ENCODE measurements at regions of chr7 and their contacts with region 1.

Region 1: GRCh38 chr7:107078517-107078966 is 34.0 kb downstream of the PRKAR2B start:
- DNase-seq: peak; percentile 95
- H3K4me3 ChIP-seq: peak overlapping the region in 1 of 3 experiments; percentile 40
- H3K27ac ChIP-seq: peak overlapping the region; percentile 95
- H3K4me1 ChIP-seq: peaks cover 51% of the 10 kb centered on the region
- H3K27me3 ChIP-seq: no peaks in the 10 kb centered on the region
- CTCF ChIP-seq: no peak
- POLR2A ChIP-seq: peak; percentile 39

Region 2: DNA sequence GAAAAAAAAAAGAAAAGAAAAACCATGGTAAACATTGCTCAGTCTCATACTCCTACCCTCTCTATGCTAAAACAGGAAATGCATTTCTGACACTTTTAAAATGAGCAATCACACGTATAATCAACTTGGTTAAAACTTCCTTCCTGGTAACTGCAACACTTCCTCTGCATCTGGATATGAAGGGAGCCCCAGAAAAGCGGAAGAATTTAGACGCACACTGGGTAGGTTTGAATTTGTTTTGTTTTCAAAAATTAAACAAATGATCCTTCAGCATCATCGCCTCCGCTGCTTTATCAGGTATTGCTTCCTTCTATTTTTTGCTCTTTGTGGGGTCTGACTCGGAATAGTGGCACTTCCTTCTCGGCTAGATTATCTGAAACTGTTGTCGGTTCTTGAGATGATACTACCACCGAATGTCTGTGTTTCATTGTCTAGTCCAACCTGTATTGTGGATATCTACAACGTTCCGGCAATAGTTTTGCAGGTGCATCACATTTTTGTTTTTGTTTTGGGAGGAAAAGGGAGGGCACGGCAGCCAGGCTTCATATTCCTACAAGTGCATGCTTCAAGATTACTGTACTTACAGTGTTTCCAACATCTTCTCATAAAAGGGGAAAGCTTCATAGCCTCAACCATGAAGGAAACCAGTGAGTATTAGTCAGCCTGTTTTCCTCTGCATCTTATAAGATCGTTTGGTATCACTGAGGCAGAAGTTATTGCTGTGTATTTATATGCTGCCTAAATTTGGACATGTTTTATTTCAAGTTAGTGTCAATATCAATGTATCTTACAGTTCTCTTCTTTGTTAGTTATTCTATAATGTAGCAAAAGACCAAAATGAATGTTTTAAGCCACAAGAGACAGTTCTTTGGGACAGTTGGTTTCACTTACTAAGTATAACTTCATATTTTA is 213.2 kb before region 1 on chr7 and contains the start of gene PIK3CG:
- CTCF ChIA-PET with region 1: no interaction called
- POLR2A ChIA-PET with region 1: no interaction called
- dilution Hi-C with region 1: no loop called
- intact Hi-C with region 1: no loop called
- DNase-seq: peak; percentile 64
- H3K4me3 ChIP-seq: peak within 1 kb of the TSS; percentile 29 to 87 (median 80)
- H3K27ac ChIP-seq: peak within 1 kb of the TSS; percentile 51
- H3K4me1 ChIP-seq: peaks cover 25% of the 10 kb centered on the region
- H3K27me3 ChIP-seq: no peaks in the 10 kb centered on the region
- CTCF ChIP-seq: no peak
- POLR2A ChIP-seq: peak; percentile 50
- total RNA-seq, gene PIK3CG: 4.9 and 6.2 TPM in 2 replicates

Region 3: GRCh38 chr7:107044347-107045194 is 34.0 kb before region 1 on chr7 and contains the start of gene PRKAR2B:
- CTCF ChIA-PET with region 1: interaction called, 5 read pairs
- POLR2A ChIA-PET with region 1: interaction called, 5 read pairs
- dilution Hi-C with region 1: no loop called
- intact Hi-C with region 1: loop called (anchors 1 kb)
- DNase-seq: peak; percentile 83
- H3K4me3 ChIP-seq: peak within 1 kb of the TSS; percentile 95 to 97 (median 95)
- H3K27ac ChIP-seq: peak within 1 kb of the TSS; percentile 22
- H3K4me1 ChIP-seq: peaks cover 44% of the 10 kb centered on the region
- H3K27me3 ChIP-seq: no peaks in the 10 kb centered on the region
- CTCF ChIP-seq: peak in 1 of 2 donors; percentile 18
- POLR2A ChIP-seq: peak; percentile 58
- total RNA-seq, gene PRKAR2B: 37.6 and 39.8 TPM in 2 replicates

Region 4: DNA sequence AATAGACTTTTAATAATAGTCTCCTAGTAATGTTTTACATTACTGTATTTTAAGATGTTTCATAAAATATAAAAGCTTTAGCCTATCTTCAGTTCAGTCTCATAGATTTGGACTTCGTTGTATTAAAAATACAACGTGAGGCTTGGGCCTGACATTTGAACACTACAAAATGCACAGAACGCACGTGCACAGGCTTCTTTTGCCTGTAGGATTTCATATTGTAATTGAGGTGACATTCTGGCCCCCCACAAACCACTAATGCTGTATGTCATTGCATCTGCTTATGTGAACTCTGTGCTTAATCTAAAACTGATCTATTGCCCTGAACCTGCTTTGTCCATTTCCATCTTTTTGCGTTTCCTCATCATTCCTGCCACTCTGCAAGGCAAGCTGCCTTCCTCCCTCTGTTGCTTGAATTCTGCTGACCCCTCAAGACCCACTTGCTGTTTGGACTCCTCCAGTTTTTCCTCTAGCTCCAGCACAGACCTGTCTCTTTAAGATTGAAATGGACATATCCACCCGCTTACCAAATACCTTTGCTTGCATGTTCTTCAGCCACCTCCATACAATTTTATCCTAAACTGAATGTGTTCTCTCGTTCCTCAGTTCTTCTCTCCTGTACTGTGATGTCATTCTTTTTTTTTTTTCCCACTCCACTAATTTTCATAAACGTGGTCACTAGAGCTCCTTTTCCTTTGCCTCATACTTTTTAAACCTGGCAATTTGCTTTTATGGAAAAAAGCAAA is 21.6 kb before region 1 on chr7:
- CTCF ChIA-PET with region 1: interaction called, 14 read pairs
- POLR2A ChIA-PET with region 1: no interaction called
- dilution Hi-C with region 1: no loop called
- intact Hi-C with region 1: no loop called
- DNase-seq: no peak
- H3K4me3 ChIP-seq: no peak overlapping the region
- H3K27ac ChIP-seq: no peak overlapping the region
- H3K4me1 ChIP-seq: peaks cover 6% of the 10 kb centered on the region
- H3K27me3 ChIP-seq: no peaks in the 10 kb centered on the region
- CTCF ChIP-seq: no peak
- POLR2A ChIP-seq: no peak

Region 5: GRCh38 chr7:107103363-107103762 is 24.8 kb after region 1 on chr7:
- CTCF ChIA-PET with region 1: interaction called, 3 read pairs
- POLR2A ChIA-PET with region 1: interaction called, 7 read pairs
- dilution Hi-C with region 1: no loop called
- intact Hi-C with region 1: loop called (anchors 2 kb)
- DNase-seq: peak; percentile 65
- H3K4me3 ChIP-seq: no peak overlapping the region
- H3K27ac ChIP-seq: peak overlapping the region; percentile 18
- H3K4me1 ChIP-seq: peaks cover 29% of the 10 kb centered on the region
- H3K27me3 ChIP-seq: no peaks in the 10 kb centered on the region
- CTCF ChIP-seq: no peak
- POLR2A ChIP-seq: no peak

Region 6: DNA sequence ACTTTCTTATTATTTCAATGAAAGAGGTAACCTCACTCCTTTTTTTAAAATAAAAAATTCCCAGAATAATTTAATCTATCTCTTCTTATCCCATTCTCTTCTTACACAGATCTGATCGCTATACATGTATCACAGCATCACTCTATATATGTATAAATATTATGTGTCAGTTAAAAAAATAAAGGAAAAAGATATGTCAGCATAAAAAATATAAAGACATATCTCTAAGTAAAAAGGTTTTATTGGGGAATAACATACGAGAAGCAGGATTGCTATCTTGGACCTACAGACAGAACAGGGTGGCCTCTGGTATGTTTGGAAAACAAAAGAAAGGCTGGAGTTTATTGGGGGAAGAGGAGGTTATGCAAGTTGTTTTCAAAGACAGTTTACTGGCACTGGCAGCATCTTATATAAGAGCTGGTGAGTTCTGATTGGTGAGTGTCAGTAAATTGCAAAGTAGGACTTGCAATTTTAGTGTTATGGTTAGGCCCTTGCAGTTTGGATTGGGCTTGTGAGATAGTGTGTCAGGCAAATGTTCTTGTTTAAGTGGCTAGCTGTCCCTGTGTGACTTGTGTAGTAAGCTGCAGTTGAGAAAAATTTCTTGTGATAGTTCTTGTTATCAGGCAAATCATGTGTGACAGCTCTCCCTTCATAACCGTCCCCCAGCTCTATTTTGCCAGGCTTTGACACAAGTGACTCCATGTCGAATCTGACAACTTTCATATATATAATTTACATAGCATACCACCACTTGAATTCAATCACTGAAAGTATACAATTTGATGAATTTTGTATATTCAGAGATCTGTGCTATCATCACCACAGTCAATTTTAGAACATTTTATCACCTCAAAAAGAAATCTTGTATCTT is 208.4 kb after region 1 on chr7:
- CTCF ChIA-PET with region 1: no interaction called
- POLR2A ChIA-PET with region 1: no interaction called
- dilution Hi-C with region 1: no loop called
- intact Hi-C with region 1: no loop called
- DNase-seq: no peak
- H3K4me3 ChIP-seq: no peak overlapping the region
- H3K27ac ChIP-seq: no peak overlapping the region
- H3K4me1 ChIP-seq: no peaks in the 10 kb centered on the region
- H3K27me3 ChIP-seq: no peaks in the 10 kb centered on the region
- CTCF ChIP-seq: no peak
- POLR2A ChIP-seq: no peak

Measured in endothelial cell of umbilical vein (primary cell).